Mammary epithelial cell (primary cell): ENCODE measurements at regions of chr11 and their contacts with region 1.

Region 1: DNA sequence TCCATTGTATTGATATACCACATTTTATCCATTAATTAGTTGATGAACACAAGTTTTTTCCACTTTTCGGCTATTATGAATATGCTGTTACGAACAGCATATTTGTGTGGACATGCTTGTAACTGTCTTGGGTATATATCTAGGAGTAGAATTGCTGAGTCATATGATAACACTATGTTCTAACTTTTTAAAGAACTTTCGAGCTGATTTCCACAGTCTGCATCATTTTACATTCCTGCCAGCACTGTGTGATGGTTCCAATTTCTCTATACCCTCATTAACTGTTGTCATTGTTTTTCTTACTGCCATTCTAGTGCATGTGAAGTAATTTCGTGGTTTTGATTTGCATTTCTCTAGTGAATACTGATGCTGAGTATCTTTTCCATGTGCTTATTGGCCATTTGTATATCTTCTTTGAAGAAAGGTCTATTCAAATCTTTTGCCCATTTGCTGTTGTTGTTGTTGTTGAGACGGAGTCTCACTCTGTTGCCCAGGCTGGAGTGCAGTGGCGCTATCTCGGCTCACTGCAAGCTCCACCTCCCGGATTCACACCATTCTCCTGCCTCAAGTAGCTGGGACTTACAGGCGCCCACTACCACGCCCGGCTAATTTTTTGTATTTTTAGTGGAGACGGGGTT is 7.4 kb upstream of the RCE1 start:
- DNase-seq: no peak
- H3K4me3 ChIP-seq: no peak overlapping the region
- H3K27ac ChIP-seq: no peak overlapping the region
- H3K4me1 ChIP-seq: no peaks in the 10 kb centered on the region
- H3K27me3 ChIP-seq: no peaks in the 10 kb centered on the region
- CTCF ChIP-seq: no peak

Region 2: GRCh38 chr11:66579017-66579606 is 256.8 kb before region 1 on chr11:
- CTCF ChIA-PET with region 1: no interaction called
- dilution Hi-C with region 1: no loop called
- in situ Hi-C with region 1: no loop called
- intact Hi-C with region 1: loop called (anchors 1 kb)
- DNase-seq: peak; percentile 56
- H3K4me3 ChIP-seq: no peak overlapping the region
- H3K27ac ChIP-seq: no peak overlapping the region
- H3K4me1 ChIP-seq: no peaks in the 10 kb centered on the region
- H3K27me3 ChIP-seq: no peaks in the 10 kb centered on the region
- CTCF ChIP-seq: peak; percentile 68 to 81